Activated CD8-positive, alpha-beta T cell treated with anti-CD3 and anti-CD28 coated beads for 36 hours (primary cell): ENCODE measurements at regions of chr17 and their contacts with region 1.

Region 1: DNA sequence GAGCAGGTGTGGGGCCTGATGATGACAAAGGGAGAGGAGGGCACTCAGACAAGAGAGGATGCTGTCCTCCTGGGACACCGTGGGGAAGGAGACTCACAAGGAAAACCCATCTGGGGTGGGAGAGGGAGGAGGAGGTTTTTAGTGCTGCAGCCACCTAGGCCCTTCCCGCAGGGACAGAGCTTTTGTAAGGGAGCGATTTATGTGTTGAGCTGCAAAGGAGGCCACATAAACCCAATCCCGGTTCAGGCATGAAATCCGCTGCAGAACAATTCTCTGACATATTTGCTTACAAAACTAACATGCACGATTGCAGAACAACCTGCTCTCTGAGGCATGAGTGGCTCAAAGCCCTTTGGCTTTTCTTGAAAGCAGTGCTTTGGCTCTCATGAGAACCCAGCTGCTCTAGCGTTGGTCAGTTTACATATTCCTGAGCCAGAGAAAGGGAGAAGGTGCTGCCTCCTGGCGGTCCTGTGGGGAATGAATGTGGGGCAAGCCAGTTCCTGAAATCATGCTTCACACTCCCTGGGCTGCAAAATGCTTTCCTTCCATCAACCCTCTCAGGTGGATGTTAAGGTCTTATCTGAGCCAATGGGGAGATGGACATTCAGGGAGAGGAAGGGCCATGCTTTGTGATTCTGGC is 122.4 kb upstream of the NLRP1 start:
- DNase-seq: peak; percentile 75
- ATAC-seq: no peak
- H3K4me3 Mint-ChIP-seq: no peak overlapping the region
- H3K27ac Mint-ChIP-seq: no peak overlapping the region
- H3K4me1 Mint-ChIP-seq: no peaks in the 10 kb centered on the region
- H3K27me3 Mint-ChIP-seq: peaks cover 10% of the 10 kb centered on the region
- CTCF ChIP-seq: peak; percentile 77

Region 2: GRCh38 chr17:5595796-5596195 is 110.9 kb before region 1 on chr17:
- CTCF ChIA-PET with region 1: interaction called, 36 read pairs
- POLR2A ChIA-PET with region 1: no interaction called
- intact Hi-C with region 1: loop called (anchors 5 kb)
- DNase-seq: no peak
- ATAC-seq: no peak
- H3K4me3 Mint-ChIP-seq: no peak overlapping the region
- H3K27ac Mint-ChIP-seq: no peak overlapping the region
- H3K4me1 Mint-ChIP-seq: no peaks in the 10 kb centered on the region
- H3K27me3 Mint-ChIP-seq: peaks cover 18% of the 10 kb centered on the region
- CTCF ChIP-seq: no peak

Region 3: GRCh38 chr17:5846018-5846417 is 139.3 kb after region 1 on chr17:
- CTCF ChIA-PET with region 1: no interaction called
- POLR2A ChIA-PET with region 1: no interaction called
- intact Hi-C with region 1: no loop called
- DNase-seq: no peak
- ATAC-seq: no peak
- H3K4me3 Mint-ChIP-seq: no peak overlapping the region
- H3K27ac Mint-ChIP-seq: no peak overlapping the region
- H3K4me1 Mint-ChIP-seq: no peaks in the 10 kb centered on the region
- H3K27me3 Mint-ChIP-seq: peaks cover 4% of the 10 kb centered on the region
- CTCF ChIP-seq: no peak